ENCODE measurements at regions of chr16 and their contacts with region 1.

Region 1: GRCh38 chr16:85393674-85394483 is 219.2 kb upstream of the GSE1 start:
- DNase-seq: peak; percentile 86
- H3K4me3 Mint-ChIP-seq: no peak overlapping the region
- H3K27ac Mint-ChIP-seq: no peak overlapping the region
- H3K4me1 Mint-ChIP-seq: peaks cover 11% of the 10 kb centered on the region
- H3K27me3 Mint-ChIP-seq: peaks cover 77% of the 10 kb centered on the region
- CTCF ChIP-seq: peak; percentile 98

Region 2: GRCh38 chr16:85305996-85306792 is 87.7 kb before region 1 on chr16:
- CTCF ChIA-PET with region 1: no interaction called
- intact Hi-C with region 1: loop called (anchors 10 kb)
- DNase-seq: peak; percentile 81
- H3K4me3 Mint-ChIP-seq: no peak overlapping the region
- H3K27ac Mint-ChIP-seq: no peak overlapping the region
- H3K4me1 Mint-ChIP-seq: peaks cover 33% of the 10 kb centered on the region
- H3K27me3 Mint-ChIP-seq: peaks cover 74% of the 10 kb centered on the region
- CTCF ChIP-seq: no peak

Region 3: DNA sequence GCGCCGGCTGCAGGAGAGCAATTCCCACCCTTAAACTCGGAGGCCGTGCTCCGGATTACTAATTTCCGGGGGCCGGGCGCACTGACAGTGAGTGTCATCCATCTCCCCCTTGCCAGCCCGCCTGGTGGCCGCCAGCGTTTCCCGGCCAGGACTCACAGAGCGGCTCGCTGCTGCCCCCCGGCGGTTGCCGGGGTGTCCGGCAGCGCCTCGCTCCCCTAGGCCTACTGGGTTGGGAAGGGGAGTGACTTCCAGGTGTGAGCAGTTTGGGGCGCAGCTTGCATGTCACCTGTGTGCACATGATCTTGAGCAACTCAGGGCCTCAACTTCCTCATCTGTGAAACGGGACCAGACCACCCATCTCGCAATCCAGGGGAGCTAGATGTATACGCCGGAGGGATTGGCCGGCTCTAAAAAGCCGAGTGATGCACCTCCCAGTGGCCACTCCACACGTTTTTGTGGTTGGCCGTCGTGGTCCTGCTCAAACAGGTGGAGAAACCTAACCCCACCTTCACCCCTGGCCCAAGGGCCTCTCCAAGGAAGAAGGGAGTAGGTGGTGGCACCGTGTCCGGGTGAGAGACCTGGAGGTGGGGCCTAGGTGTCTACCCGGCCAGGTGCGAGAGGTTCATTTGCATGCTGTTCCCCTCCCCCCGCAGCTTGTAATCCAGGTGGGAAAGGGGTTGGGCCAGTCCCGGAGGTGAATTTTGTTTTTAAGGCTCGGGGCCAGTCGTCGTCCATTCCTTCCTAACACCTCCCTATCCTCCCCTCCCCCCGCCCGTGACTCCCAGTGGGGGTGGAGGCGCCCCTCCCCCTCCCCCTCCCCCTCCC is 216.8 kb after region 1 on chr16:
- CTCF ChIA-PET with region 1: interaction called, 4 read pairs
- intact Hi-C with region 1: loop called (anchors 10 kb)
- DNase-seq: peak; percentile 95
- H3K4me3 Mint-ChIP-seq: peak overlapping the region; percentile 76
- H3K27ac Mint-ChIP-seq: peak overlapping the region; percentile 61
- H3K4me1 Mint-ChIP-seq: peaks cover 8% of the 10 kb centered on the region
- H3K27me3 Mint-ChIP-seq: peaks cover 43% of the 10 kb centered on the region
- CTCF ChIP-seq: peak; percentile 99

Region 4: DNA sequence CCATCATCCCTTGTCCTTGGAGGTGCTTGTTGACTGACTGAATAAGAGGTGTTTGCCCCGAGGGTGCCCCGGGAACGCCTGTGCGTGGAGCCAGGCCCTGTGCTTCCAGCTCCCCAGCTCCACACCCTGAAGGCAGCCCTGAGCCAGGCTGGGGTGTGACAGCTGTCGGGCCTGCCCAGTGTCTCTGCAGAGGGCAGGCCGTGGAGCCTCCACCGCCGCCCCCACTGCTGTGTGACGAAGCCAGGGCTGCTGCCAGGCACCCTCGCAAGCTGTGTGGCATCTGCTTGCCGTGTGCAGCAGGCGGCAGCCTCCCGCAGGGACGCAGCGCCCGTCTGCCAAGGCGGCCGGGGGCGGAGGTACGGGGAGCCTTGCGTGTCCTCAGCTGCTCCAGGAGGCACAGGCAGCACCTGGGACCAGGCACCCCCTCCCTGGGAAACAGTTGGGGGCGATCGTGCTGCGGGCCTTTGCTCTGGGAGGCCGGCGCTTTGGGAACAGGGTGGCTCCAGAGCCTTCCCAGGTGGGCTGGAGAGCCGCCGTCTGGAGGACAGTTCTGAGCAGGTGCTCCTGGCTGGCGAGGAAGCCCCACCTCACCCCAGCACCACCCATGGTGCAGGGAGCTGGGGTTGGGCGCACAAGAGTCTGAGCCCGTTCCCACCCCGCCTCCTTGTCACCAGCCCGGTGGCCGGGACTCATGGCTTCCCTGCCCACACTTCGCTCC is 245.8 kb after region 1 on chr16:
- CTCF ChIA-PET with region 1: no interaction called
- intact Hi-C with region 1: no loop called
- DNase-seq: no peak
- H3K4me3 Mint-ChIP-seq: no peak overlapping the region
- H3K27ac Mint-ChIP-seq: no peak overlapping the region
- H3K4me1 Mint-ChIP-seq: peaks cover 9% of the 10 kb centered on the region
- H3K27me3 Mint-ChIP-seq: no peaks in the 10 kb centered on the region
- CTCF ChIP-seq: no peak

Measured in Calu3 (cell line).